Psoas muscle (tissue), 8 donors: ENCODE measurements at regions of chr13 and their contacts with region 1.

Region 1: GRCh38 chr13:51452361-51453206 is at the start of gene INTS6:
- DNase-seq: peak; percentile 99
- ATAC-seq: peak; percentile 90 to 92 (median 92)
- H3K4me3 ChIP-seq: peak within 1 kb of the TSS; percentile 94
- H3K27ac ChIP-seq: peak within 1 kb of the TSS; percentile 98
- H3K4me1 ChIP-seq: peaks cover 29% of the 10 kb centered on the region
- H3K27me3 ChIP-seq: no peaks in the 10 kb centered on the region
- CTCF ChIP-seq: no peak
- total RNA-seq, gene INTS6: 14.4 to 19.2 (median 17.6) TPM

Region 2: DNA sequence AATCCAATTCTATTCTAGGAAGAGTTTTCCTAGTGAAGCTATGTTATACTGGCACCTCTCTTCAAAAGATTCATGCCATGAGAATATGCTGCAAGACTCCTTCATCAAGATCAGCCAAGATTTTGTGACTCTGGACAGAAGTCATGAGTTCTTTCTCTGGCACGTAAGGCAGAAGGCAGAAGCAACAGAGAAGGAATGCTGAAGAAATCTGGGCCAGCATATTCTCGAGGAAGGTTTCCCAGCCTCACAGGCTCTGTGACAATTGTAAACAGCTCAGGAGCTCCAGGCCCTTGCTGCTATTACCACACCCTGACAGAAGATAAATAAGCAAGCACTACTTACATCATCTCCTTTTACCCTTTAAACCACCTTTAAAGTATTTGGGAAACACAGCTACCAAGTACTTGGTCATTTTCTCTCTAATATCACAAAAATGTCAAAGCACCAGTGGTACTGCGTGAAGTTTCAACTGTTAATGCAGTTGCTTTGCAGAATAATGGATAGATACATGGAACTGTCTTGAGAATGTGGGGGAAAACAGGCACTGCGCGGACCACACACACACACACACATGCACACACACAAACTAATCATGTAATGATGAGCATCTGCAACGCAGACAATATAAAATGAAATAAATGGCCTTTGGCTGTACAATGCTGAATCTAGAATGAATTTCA is 55.2 kb before region 1 on chr13:
- intact Hi-C with region 1: loop called in 1 of 2 experiments (anchors 5 kb)
- DNase-seq: peak in 1 of 2 donors; percentile 51
- ATAC-seq: peak; percentile 77 to 93 (median 88)
- H3K4me3 ChIP-seq: no peak overlapping the region
- H3K27ac ChIP-seq: peak overlapping the region; percentile 51
- H3K4me1 ChIP-seq: peaks cover 32% of the 10 kb centered on the region
- H3K27me3 ChIP-seq: no peaks in the 10 kb centered on the region
- CTCF ChIP-seq: no peak

Region 3: DNA sequence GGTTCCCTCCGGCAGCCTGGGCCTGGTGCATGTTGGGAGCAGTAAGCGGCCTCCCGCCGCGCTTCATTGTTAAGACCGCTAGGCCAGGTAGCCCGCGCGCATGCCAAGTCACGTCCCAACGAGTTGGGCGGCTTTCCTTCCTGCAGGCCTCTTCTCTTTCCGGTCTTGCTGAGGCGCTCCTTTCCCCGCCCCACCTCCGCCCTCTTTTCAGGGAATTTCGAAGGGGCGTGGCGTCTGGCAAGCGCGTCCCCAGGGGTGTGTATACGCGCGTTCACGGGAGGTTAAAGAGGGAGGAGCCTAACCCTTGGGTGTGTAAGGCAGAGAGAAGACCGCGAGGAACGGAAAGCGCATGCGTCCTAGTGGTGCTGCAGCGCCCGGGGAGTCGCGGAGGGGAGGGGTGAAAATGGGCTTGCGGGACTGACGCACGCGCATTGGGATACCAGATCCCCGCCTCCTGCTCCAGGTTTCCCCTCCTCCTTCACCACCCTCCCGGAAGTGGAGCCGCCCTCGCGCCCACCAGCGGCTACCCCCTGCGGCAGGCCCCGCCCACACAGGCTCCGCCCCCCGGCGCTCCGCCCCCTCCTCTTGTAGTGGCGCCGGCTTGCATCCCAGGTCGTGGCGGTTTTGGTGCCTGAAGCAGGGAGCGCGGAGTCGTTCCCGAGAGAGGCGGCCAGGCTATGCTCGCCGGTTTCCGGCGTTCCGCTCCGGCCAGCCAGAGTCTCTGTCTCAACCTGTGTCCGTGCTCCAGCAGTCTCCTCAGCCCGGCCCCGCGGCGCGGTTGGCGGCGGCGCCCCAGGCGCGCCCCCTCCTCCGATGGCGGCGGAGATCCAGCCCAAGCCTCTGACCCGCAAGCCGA is 131.5 kb after region 1 on chr13 and contains the start of gene WDFY2:
- intact Hi-C with region 1: loop called (anchors 2 kb)
- DNase-seq: peak; percentile 99 to 100
- ATAC-seq: peak; percentile 94 to 96 (median 95)
- H3K4me3 ChIP-seq: peak within 1 kb of the TSS; percentile 83
- H3K27ac ChIP-seq: peak within 1 kb of the TSS; percentile 84
- H3K4me1 ChIP-seq: peaks cover 12% of the 10 kb centered on the region
- H3K27me3 ChIP-seq: no peaks in the 10 kb centered on the region
- CTCF ChIP-seq: no peak
- total RNA-seq, gene WDFY2: 1.4 to 2.3 (median 1.9) TPM

Region 4: GRCh38 chr13:51729866-51730546 is 277.4 kb after region 1 on chr13:
- intact Hi-C with region 1: loop called in 1 of 2 experiments (anchors 5 kb)
- DNase-seq: peak; percentile 69 to 74
- ATAC-seq: peak; percentile 43 to 78 (median 62)
- H3K4me3 ChIP-seq: no peak overlapping the region
- H3K27ac ChIP-seq: peak overlapping the region; percentile 55
- H3K4me1 ChIP-seq: peaks cover 4% of the 10 kb centered on the region
- H3K27me3 ChIP-seq: no peaks in the 10 kb centered on the region
- CTCF ChIP-seq: no peak

Region 5: GRCh38 chr13:51803422-51804294 is 351.1 kb after region 1 on chr13 and contains the start of gene DHRS12:
- intact Hi-C with region 1: loop called (anchors 5 to 10 kb)
- DNase-seq: peak; percentile 89 to 94
- ATAC-seq: peak; percentile 90 to 91 (median 90)
- H3K4me3 ChIP-seq: peak within 1 kb of the TSS; percentile 95
- H3K27ac ChIP-seq: peak within 1 kb of the TSS; percentile 100
- H3K4me1 ChIP-seq: peaks cover 26% of the 10 kb centered on the region
- H3K27me3 ChIP-seq: no peaks in the 10 kb centered on the region
- CTCF ChIP-seq: no peak
- total RNA-seq, gene DHRS12: 4.1 to 10.1 (median 6.9) TPM